Activated CD4-positive, alpha-beta memory T cell treated with anti-CD3 and anti-CD28 coated beads for 36 hours (primary cell): ENCODE measurements at regions of chr9 and their contacts with region 1.

Region 1: GRCh38 chr9:111916234-111916645 is 19.6 kb downstream of the UGCG start:
- DNase-seq: peak; percentile 53
- H3K4me3 Mint-ChIP-seq: peak overlapping the region; percentile 8
- H3K27ac Mint-ChIP-seq: peak overlapping the region; percentile 77
- H3K4me1 Mint-ChIP-seq: peaks cover 54% of the 10 kb centered on the region
- H3K27me3 Mint-ChIP-seq: no peaks in the 10 kb centered on the region

Region 2: DNA sequence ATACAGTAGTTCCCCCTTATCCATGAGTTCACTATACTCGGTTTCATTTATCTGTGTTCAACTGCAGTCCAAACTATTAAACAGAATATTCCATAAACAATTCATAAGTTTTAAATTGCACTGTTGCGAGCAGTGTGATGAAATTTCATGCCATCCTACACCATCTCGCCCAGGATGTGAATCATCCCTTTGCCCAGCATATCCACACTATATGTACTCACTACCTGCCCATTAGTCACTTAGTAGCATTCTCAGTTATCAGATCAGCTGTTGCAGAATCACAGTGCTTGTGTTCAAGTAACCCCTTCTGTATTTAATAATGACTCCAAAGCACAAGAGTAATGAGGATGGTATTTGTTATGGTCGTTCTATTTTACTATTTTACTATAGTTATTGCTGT is 173.0 kb before region 1 on chr9:
- CTCF ChIA-PET with region 1: no interaction called
- POLR2A ChIA-PET with region 1: no interaction called
- intact Hi-C with region 1: loop called (anchors 5 kb)
- DNase-seq: peak; percentile 59
- H3K4me3 Mint-ChIP-seq: no peak overlapping the region
- H3K27ac Mint-ChIP-seq: peak overlapping the region; percentile 80
- H3K4me1 Mint-ChIP-seq: peaks cover 10% of the 10 kb centered on the region
- H3K27me3 Mint-ChIP-seq: no peaks in the 10 kb centered on the region

Region 3: DNA sequence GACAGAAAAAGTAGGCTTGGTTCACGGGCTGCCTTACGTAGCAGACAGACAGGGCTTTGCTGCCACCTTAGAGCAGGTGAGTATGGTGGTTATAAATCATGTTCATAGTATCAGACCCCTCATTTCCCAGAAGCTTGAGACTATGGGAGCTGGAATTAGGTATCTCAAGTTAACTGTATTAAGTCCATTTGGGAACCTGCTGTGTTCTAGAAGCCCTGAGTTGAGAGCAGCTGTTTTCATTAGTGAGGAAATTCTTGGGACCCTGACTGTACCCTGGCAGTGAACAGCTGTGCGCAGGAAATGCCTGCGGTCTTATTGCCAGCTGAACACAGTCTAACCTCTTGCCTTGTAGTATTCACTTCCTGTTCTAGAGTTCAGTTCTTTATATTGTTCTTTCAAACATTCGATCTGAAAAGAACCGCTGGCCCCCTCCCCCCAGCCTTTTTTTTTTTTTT is 10.2 kb after region 1 on chr9:
- CTCF ChIA-PET with region 1: interaction called, 4 read pairs
- POLR2A ChIA-PET with region 1: interaction called, 3 read pairs
- intact Hi-C with region 1: loop called (anchors 1 kb)
- DNase-seq: peak; percentile 72
- H3K4me3 Mint-ChIP-seq: no peak overlapping the region
- H3K27ac Mint-ChIP-seq: peak overlapping the region; percentile 51
- H3K4me1 Mint-ChIP-seq: peaks cover 30% of the 10 kb centered on the region
- H3K27me3 Mint-ChIP-seq: no peaks in the 10 kb centered on the region

Region 4: DNA sequence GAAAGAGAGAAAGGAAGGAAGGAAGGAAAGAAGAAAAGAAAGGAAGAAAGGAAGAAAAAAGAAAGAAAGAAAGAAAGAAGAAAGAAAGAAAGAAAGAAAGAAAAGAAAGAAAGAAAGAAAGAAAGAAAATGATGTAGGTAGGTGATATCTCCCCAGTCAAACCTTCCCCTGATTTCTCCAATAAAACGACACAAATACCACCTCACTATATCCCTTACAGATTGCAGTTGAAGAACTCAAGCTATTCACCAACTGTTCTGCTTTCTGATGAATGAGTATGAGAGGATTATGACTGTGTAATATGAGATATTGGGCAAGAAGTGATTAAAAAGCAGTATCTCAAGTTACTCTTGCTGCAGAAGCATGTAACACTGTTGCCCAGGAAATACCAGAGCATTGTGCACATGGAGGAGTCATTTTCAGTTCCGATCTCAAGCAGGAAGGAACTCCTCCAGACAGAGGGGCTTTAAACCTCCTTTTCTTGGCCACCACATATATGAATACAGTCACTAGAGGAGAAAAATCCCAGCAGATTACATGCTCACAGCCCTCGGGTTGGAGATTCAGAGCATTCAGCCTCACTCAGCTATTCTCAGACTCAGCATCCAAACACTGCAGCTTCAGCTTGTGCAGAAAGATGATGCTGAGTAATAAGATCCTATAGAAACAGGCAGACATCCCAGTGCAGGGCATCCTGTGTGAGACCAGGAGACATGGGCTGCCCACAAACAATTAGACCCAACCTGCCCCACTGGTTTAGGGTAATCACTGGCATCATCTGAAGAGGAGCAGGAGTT is 41.8 kb after region 1 on chr9:
- CTCF ChIA-PET with region 1: no interaction called
- POLR2A ChIA-PET with region 1: no interaction called
- intact Hi-C with region 1: loop called (anchors 2 kb)
- DNase-seq: no peak
- H3K4me3 Mint-ChIP-seq: no peak overlapping the region
- H3K27ac Mint-ChIP-seq: no peak overlapping the region
- H3K4me1 Mint-ChIP-seq: peaks cover 14% of the 10 kb centered on the region
- H3K27me3 Mint-ChIP-seq: peaks cover 6% of the 10 kb centered on the region

Region 5: DNA sequence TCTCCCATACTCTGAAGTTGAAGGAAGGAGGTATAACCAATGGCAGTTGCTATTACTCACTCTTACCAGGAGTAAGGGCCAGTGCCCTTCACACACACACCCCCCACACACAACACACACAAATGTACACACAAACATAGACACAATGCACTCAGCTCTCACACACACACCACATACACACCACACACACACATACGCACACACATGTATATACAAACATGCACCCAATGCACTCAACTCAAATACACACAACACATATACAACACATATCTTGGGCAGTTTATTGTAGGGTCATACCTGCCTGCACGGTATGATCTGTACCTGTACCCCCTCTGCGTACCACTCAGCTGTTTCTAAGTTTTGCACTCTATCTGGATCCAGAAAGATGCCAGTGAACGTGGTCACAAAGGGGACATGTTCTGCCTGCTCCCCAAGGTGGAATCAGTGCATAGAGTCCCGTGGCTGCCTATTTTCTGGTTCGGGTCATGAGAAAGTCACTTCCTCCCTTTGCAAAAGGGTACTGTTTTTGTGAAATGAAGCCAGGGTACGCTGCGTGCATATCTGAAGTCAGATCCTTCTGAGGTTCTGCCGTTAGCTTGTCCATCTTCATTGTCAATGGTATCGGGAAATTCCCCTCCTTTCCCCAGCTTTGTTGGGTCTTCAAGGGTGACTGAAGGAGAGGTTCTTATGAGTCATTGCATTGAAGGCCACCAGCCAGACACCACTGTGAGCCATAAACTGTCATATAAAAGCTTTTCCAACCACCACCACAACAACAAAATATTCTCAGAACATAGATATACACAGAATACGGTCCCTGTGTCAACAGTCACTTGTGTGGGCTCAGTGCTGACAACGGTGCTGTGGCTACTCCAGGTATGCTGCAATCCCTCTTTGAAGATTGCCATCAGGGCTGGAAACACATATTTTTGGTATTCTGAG is 112.3 kb after region 1 on chr9:
- CTCF ChIA-PET with region 1: interaction called, 4 read pairs
- POLR2A ChIA-PET with region 1: interaction called, 4 read pairs
- intact Hi-C with region 1: loop called (anchors 1 kb)
- DNase-seq: peak; percentile 59
- H3K4me3 Mint-ChIP-seq: no peak overlapping the region
- H3K27ac Mint-ChIP-seq: no peak overlapping the region
- H3K4me1 Mint-ChIP-seq: peaks cover 43% of the 10 kb centered on the region
- H3K27me3 Mint-ChIP-seq: peaks cover 6% of the 10 kb centered on the region

Region 6: DNA sequence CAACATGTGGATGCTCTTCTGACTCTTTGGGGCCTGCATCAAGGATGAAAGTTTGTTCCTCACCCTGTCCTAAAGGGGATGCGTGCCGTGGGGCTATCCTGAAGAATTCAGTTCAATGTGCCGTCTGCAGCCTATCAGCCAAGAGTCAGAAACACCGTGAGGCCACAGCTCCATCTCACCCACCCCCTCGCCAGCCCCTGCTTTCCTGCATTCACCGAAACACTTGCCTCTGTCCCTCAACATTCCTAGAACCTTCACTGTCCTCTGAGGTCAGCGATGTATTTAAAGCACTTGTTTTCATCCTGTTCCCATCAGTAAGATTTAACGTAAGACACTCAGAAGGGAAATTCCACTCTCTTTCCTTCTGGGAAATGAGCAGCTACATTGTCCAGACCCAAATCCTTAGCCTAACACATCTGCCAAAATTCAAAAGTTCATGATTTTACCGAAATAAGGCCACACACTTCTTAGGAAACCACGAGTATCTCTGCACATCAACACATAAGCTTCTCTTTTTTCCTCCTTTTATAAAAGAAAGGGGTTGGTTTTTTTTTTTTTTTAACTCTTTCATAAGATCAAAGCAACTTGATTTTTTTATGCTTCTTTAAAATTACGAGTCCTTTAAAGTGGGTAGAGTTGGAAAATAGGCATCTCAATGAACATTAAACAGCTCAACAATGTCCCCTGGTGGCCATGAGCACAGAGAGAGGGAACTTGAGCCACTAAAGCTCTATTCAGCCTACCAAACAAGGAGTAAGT is 158.2 kb after region 1 on chr9:
- CTCF ChIA-PET with region 1: interaction called, 15 read pairs
- POLR2A ChIA-PET with region 1: no interaction called
- intact Hi-C with region 1: loop called (anchors 5 kb)
- DNase-seq: peak; percentile 71
- H3K4me3 Mint-ChIP-seq: peak overlapping the region; percentile 5
- H3K27ac Mint-ChIP-seq: peak overlapping the region; percentile 3
- H3K4me1 Mint-ChIP-seq: peaks cover 32% of the 10 kb centered on the region
- H3K27me3 Mint-ChIP-seq: peaks cover 1% of the 10 kb centered on the region